Mammary epithelial cell (primary cell): ENCODE measurements at regions of chr20 and their contacts with region 1.

Region 1: GRCh38 chr20:53738039-53738944 is 144.7 kb upstream of the ZNF217 start:
- DNase-seq: peak; percentile 78
- H3K4me3 ChIP-seq: no peak overlapping the region
- H3K27ac ChIP-seq: no peak overlapping the region
- H3K4me1 ChIP-seq: peaks cover 29% of the 10 kb centered on the region
- H3K27me3 ChIP-seq: no peaks in the 10 kb centered on the region
- CTCF ChIP-seq: no peak

Region 2: DNA sequence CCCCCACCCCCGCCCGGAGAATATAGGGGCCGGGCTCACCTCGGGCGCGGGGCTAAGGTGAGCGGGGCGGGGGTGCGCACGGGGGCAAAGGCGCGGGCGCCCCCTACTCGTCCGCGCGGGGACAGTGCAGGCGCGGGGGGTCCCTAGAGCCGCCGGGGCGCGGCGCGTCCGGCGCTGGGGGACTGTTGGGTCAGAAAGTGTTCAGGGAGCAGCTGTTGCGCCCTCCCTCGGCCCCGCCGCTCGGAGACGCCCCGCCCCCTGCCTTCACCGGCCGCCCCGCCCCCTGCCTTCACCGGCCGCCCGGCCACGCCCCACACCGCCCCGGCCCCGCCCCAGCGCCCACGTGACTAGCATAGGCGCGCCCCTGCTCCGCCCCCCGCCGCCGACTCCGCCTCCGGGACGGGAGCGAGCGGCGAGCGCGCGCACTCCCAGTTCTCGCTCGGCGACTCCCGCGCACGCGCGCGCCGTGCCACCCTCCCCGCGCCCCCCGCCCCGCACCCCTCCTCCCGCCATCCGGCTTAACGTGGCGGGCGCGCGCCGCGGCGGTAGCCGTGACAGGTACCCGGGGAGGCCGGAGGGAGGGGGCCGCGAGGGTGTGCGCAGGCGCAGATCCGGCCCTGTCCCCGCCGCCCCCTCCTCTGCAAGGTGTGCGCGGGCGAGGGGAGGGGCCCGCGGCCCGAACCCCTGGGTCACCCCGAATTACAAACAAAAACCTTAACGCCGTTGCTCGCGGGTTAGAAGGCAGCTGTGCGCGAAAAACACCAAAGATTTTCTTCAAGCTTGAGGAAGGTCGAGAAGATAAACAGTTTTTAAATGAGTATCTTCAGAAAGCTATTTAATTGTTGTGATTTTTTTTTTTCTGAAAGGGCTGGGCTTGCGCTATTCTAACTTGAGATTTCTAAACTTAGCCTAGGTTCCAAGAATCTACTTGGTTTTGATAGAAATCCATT is 143.9 kb before region 1 on chr20:
- CTCF ChIA-PET with region 1: interaction called, 4 read pairs
- dilution Hi-C with region 1: no loop called
- in situ Hi-C with region 1: no loop called
- intact Hi-C with region 1: loop called (anchors 5 kb)
- DNase-seq: peak; percentile 85
- H3K4me3 ChIP-seq: peak overlapping the region; percentile 67 to 85 (median 83)
- H3K27ac ChIP-seq: peak overlapping the region; percentile 81
- H3K4me1 ChIP-seq: peaks cover 28% of the 10 kb centered on the region
- H3K27me3 ChIP-seq: no peaks in the 10 kb centered on the region
- CTCF ChIP-seq: no peak

Region 3: GRCh38 chr20:53773792-53774401 is 35.6 kb after region 1 on chr20:
- CTCF ChIA-PET with region 1: no interaction called
- dilution Hi-C with region 1: no loop called
- in situ Hi-C with region 1: no loop called
- intact Hi-C with region 1: loop called (anchors 5 kb)
- DNase-seq: peak; percentile 94
- H3K4me3 ChIP-seq: peak overlapping the region in 1 of 3 experiments; percentile 27
- H3K27ac ChIP-seq: peak overlapping the region; percentile 100
- H3K4me1 ChIP-seq: peaks cover 25% of the 10 kb centered on the region
- H3K27me3 ChIP-seq: no peaks in the 10 kb centered on the region
- CTCF ChIP-seq: no peak

Region 4: DNA sequence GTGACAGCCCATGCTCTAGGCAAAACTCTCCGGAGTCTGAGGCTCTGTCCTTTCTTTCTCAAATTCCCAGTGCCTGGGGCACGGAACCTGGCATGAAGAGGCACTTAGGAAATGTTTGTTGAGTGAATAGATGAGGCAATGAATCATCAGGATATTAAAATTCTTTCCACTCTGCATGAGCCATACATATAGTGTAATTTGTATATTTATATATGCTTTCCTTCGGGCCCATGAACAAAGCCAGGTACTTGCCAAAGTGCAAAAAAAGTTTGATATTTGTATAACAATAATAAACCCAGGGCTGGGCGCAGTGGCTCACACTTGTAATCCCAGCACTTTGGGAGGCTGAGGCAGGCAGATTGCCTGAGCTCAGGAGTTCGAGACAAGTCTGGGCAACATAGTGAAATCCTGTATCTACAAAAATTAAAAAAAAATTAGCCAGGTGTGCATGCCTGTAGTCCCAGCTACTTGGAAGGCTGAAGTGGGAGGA is 67.6 kb after region 1 on chr20:
- CTCF ChIA-PET with region 1: no interaction called
- dilution Hi-C with region 1: no loop called
- in situ Hi-C with region 1: no loop called
- intact Hi-C with region 1: loop called (anchors 10 kb)
- DNase-seq: peak; percentile 88
- H3K4me3 ChIP-seq: no peak overlapping the region
- H3K27ac ChIP-seq: peak overlapping the region; percentile 89
- H3K4me1 ChIP-seq: peaks cover 23% of the 10 kb centered on the region
- H3K27me3 ChIP-seq: no peaks in the 10 kb centered on the region
- CTCF ChIP-seq: no peak

Region 5: GRCh38 chr20:53915446-53916172 is 177.3 kb after region 1 on chr20:
- CTCF ChIA-PET with region 1: interaction called, 9 read pairs
- dilution Hi-C with region 1: no loop called
- in situ Hi-C with region 1: no loop called
- intact Hi-C with region 1: loop called (anchors 5 kb)
- DNase-seq: peak; percentile 91
- H3K4me3 ChIP-seq: peak overlapping the region; percentile 42 to 50 (median 48)
- H3K27ac ChIP-seq: peak overlapping the region; percentile 76
- H3K4me1 ChIP-seq: peaks cover 46% of the 10 kb centered on the region
- H3K27me3 ChIP-seq: no peaks in the 10 kb centered on the region
- CTCF ChIP-seq: peak; percentile 82 to 86